Heart right ventricle (tissue), 16 donors: ENCODE measurements at regions of chr16 and their contacts with region 1.

Region 1: DNA sequence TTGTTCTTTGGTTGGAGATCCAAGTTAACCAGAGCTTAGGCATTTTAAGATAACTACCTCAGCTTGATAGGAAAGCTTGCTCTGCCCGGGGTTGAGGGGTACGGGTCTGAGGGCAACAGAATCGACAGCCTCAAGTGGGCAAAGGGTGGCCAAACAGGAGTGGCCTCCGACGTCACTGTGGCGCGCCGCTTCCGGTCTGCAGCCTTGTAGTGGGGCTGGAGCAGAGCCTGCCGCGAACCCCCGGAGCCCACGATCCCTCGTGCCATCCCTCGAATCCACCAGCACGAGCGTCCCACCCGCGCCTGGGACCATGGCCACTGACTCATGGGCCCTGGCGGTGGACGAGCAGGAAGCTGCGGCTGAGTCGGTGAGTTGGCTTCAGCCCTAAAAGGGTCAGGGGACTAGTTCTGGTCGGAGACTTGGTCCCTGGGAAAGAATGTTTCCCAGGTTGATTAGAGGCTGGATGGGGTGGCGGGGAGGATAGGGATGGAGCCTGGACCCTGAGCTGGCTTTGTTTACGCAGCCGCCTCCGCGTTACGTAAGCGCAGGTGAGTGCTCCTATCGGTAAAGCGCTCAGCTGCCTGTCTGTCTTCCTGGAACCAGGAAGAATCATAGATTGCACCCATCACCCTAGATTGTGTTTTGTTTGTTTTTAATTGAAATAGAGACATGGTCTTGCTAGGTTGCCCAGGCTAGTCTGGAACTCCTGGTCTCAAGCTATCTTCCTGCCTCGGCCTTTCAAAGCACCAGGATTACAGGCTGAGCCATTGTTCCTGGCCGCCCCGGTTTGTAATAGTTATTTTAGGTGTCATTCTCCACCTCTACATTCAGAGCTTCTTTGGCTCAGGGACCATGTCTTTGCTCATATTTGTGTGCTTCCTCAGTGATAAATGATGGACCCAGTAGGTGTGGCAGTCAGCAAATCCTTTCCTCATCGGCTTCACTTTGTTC is at the start of gene DDX19B:
- DNase-seq: peak; percentile 79 to 82
- ATAC-seq: peak; percentile 91 to 96 (median 95)
- H3K4me3 ChIP-seq: peak within 1 kb of the TSS; percentile 49 to 97 (median 82)
- H3K27ac ChIP-seq: peak within 1 kb of the TSS; percentile 67 to 97 (median 92)
- H3K4me1 ChIP-seq: peaks cover 0 to 22% (median 14%) of the 10 kb centered on the region in 9 donors
- H3K27me3 ChIP-seq: no peaks in the 10 kb centered on the region
- CTCF ChIP-seq: no peak
- total RNA-seq, gene DDX19B: 14.8 to 25.3 (median 20.7) TPM

Region 2: DNA sequence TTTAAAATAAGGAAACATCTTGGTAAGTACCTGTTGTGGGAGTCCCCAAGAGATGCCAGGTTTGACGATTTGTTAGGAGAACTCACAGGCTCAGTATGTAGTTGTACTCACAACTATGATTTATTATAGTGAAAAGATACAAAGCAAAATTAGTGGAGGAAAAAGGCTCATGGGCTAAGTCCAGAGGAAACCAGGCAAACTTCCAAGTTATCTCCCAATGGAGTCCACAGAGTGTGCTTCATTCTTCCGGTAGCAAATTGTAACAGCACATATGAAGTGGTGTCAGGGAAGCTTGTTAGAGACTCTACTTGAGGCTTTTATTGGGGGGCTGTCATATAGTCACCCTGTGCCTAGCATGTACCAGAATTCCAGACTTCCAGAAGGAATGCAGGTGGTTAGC is 49.7 kb after region 1 on chr16:
- intact Hi-C with region 1: loop called in 5 of 10 experiments (anchors 1 to 5 kb)
- DNase-seq: peak in 1 of 2 donors; percentile 21
- ATAC-seq: no peak
- H3K4me3 ChIP-seq: no peak overlapping the region
- H3K27ac ChIP-seq: peak overlapping the region in 1 of 10 donors; percentile 15
- H3K4me1 ChIP-seq: peaks cover 2 to 40% (median 36%) of the 10 kb centered on the region in 9 donors
- H3K27me3 ChIP-seq: no peaks in the 10 kb centered on the region
- CTCF ChIP-seq: no peak

Region 3: DNA sequence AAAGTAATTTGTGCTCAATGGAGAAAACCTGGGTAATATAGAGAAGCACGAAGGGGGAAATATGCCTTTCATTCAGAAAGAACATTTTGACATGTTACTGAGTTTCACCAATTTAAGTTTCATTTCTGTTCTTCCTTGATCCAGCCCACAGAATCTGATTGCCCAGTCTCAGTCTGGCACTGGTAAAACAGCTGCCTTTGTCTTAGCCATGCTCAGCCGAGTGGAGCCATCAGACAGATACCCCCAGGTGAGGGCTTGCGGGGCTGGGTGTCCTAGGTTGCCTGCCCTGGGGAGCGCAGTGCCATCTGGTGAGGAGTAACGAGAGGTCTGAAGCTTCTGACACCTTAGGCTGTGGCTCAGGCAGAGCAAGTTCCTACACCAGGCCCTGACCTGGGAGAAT is 65.1 kb after region 1 on chr16:
- intact Hi-C with region 1: no loop called
- DNase-seq: no peak
- ATAC-seq: no peak
- H3K4me3 ChIP-seq: no peak overlapping the region
- H3K27ac ChIP-seq: no peak overlapping the region
- H3K4me1 ChIP-seq: no peaks in the 10 kb centered on the region
- H3K27me3 ChIP-seq: no peaks in the 10 kb centered on the region
- CTCF ChIP-seq: no peak